ENCODE measurements at regions of chr14 and their contacts with region 1.

Region 1: GRCh38 chr14:73802431-73803188 is 49.0 kb upstream of the PTGR2 start:
- DNase-seq: peak; percentile 64 to 79
- H3K4me3 ChIP-seq: no peak overlapping the region
- H3K4me3 Mint-ChIP-seq: no peak overlapping the region
- H3K27ac Mint-ChIP-seq: peak overlapping the region; percentile 68
- H3K4me1 ChIP-seq: peaks cover 36% of the 10 kb centered on the region
- H3K4me1 Mint-ChIP-seq: peaks cover 14% of the 10 kb centered on the region
- H3K27me3 ChIP-seq: no peaks in the 10 kb centered on the region
- H3K27me3 Mint-ChIP-seq: no peaks in the 10 kb centered on the region
- CTCF ChIP-seq: no peak

Region 2: GRCh38 chr14:73771848-73772638 is 30.6 kb before region 1 on chr14:
- CTCF ChIA-PET with region 1: no interaction called
- POLR2A ChIA-PET with region 1: interaction called, 4 read pairs
- intact Hi-C with region 1: loop called (anchors 2 kb)
- DNase-seq: peak; percentile 91 to 94
- H3K4me3 ChIP-seq: no peak overlapping the region
- H3K4me3 Mint-ChIP-seq: peak overlapping the region; percentile 44
- H3K27ac Mint-ChIP-seq: peak overlapping the region; percentile 51
- H3K4me1 ChIP-seq: peaks cover 31% of the 10 kb centered on the region
- H3K4me1 Mint-ChIP-seq: peaks cover 50% of the 10 kb centered on the region
- H3K27me3 ChIP-seq: no peaks in the 10 kb centered on the region
- H3K27me3 Mint-ChIP-seq: no peaks in the 10 kb centered on the region
- CTCF ChIP-seq: no peak

Region 3: DNA sequence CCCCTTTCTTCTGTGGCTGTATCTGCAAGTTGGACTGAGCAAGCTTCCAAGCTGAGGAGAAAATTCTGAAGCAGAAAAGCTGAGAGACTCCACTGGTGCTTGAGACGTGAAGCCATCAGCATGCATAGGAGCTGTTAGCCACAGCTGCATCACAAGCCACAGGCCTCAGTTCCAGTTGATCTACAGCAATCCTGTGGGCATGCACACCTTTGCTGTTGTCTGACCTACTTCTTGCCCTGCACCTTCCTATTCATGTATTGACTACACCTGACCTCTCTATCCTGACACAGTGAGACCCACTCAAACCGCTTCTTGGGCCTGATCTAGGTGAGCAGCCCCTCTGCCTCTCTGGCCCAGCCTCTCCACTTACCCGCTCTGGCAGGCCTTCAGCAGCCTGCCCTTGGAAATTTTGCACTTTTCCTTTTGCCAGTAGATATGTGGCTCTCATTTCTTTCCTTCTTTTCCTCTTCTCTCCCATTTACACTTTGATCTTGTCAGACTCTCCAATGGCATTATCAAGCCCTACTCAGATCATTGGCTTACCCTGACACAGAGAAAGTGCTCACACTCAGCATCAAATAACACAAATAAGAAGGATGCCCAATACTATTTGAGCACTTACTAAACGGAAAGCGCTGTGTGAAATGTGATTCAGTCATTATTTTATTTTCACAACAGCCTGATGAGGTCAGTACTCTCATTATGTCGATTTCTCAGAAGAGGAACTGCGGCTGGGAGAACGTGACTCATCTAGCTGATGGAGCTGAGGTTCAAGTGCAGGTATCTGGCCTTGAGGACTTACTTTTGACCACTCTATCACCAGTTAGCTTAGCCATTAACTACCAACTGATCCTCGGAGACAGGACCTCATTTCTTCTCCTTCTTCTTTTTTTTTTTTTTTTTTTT is 27.2 kb after region 1 on chr14:
- CTCF ChIA-PET with region 1: no interaction called
- POLR2A ChIA-PET with region 1: no interaction called
- intact Hi-C with region 1: no loop called
- DNase-seq: no peak
- H3K4me3 ChIP-seq: no peak overlapping the region
- H3K4me3 Mint-ChIP-seq: no peak overlapping the region
- H3K27ac Mint-ChIP-seq: no peak overlapping the region
- H3K4me1 ChIP-seq: peaks cover 18% of the 10 kb centered on the region
- H3K4me1 Mint-ChIP-seq: peaks cover 7% of the 10 kb centered on the region
- H3K27me3 ChIP-seq: no peaks in the 10 kb centered on the region
- H3K27me3 Mint-ChIP-seq: no peaks in the 10 kb centered on the region
- CTCF ChIP-seq: no peak

Measured in Caco-2 (cell line).